ENCODE measurements at regions of chr6 and their contacts with region 1.

Region 1: DNA sequence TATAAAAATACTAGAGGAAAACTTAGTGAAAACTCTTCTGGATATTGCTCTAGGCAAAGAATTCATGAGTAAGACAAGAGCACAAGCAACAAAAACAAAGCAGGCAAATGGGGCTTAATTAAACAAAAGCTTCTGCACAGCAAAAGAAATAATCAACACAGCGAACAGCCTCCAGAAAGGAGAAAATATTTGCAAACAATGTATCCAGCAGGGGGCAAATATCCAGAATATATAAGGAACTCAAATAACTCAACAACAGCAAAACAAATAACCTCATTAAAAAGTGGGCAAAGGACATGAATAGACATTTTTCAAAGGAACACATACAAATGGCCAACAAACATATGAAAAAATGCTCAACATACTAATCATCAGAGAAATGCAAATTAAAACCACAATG is 17.1 kb upstream of the HECA start:
- DNase-seq: no peak
- H3K4me3 Mint-ChIP-seq: no peak overlapping the region
- H3K27ac Mint-ChIP-seq: no peak overlapping the region
- H3K4me1 Mint-ChIP-seq: peaks cover 47% of the 10 kb centered on the region
- H3K27me3 Mint-ChIP-seq: no peaks in the 10 kb centered on the region

Region 2: DNA sequence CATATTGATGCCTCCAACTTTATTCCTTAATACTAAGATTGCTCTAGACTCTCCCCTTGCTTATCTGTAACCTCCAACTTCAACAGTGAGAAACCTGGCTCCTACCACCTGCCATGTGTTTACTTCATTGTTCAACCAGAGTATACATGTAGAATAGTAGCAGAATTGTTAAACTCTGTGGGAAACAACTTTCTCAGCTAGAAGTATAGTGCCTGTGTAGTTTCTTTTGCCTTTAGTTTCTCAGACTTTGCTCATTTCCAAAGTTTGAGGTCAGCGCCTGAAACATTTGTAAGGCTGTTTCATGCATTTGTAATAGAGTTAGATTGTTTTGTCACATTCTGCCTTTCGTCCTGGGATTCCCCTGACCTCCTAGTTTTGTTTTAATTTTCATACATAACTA is 17.8 kb before region 1 on chr6:
- CTCF ChIA-PET with region 1: no interaction called
- POLR2A ChIA-PET with region 1: interaction called, 5 read pairs
- intact Hi-C with region 1: loop called (anchors 1 kb)
- DNase-seq: peak; percentile 46
- H3K4me3 Mint-ChIP-seq: no peak overlapping the region
- H3K27ac Mint-ChIP-seq: peak overlapping the region; percentile 19
- H3K4me1 Mint-ChIP-seq: peaks cover 19% of the 10 kb centered on the region
- H3K27me3 Mint-ChIP-seq: no peaks in the 10 kb centered on the region

Region 3: DNA sequence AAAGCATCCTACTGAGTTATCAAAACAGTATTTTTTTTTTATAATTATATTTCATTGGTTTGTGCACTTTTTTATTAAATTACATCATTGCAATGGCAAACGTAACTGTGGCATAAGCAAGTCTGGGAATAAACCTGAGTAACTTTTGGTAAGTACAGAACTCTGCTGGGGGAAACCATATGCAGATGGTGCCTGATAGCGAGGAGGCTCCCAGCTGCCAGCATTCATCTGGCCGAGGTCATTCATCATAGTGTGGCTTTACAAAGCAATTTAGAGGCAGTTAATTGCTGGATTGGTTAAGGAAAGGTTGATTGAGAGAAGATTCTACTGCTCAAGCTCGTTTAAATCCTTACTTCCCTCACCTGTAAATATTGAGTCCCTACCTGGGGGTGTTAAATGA is 69.8 kb after region 1 on chr6:
- CTCF ChIA-PET with region 1: no interaction called
- POLR2A ChIA-PET with region 1: no interaction called
- intact Hi-C with region 1: no loop called
- DNase-seq: no peak
- H3K4me3 Mint-ChIP-seq: no peak overlapping the region
- H3K27ac Mint-ChIP-seq: no peak overlapping the region
- H3K4me1 Mint-ChIP-seq: peaks cover 42% of the 10 kb centered on the region
- H3K27me3 Mint-ChIP-seq: no peaks in the 10 kb centered on the region

Measured in activated CD4-positive, alpha-beta memory T cell treated with anti-CD3 and anti-CD28 coated beads for 36 hours (primary cell).